Activated CD4-positive, alpha-beta memory T cell treated with anti-CD3 and anti-CD28 coated beads for 36 hours (primary cell): ENCODE measurements at regions of chr2 and their contacts with region 1.

Region 1: DNA sequence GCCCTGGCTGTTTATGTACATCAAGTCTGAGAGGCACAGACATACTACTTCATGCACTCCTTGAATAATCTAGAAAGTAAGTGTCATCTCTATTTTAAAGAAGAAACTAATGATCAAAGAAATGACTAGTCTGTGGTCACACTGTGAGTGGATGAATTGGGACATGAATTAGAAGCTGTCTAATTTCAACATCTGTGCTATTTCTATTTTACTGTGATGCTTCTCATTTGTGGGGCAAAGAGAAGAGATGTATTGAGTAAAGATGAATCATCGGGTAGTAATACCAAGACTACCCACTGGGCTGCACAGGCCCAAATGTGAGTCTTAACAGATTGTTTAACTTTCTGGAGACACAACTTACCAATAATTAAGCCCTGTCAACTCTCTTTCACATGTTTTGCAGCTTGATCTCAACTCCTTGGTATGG is 42.4 kb upstream of the MTIF2 start:
- DNase-seq: peak; percentile 65
- H3K4me3 Mint-ChIP-seq: no peak overlapping the region
- H3K27ac Mint-ChIP-seq: no peak overlapping the region
- H3K4me1 Mint-ChIP-seq: peaks cover 22% of the 10 kb centered on the region
- H3K27me3 Mint-ChIP-seq: no peaks in the 10 kb centered on the region

Region 2: GRCh38 chr2:55268907-55269644 is 42.4 kb before region 1 on chr2 and contains the start of gene MTIF2:
- CTCF ChIA-PET with region 1: no interaction called
- POLR2A ChIA-PET with region 1: no interaction called
- intact Hi-C with region 1: loop called (anchors 2 kb)
- DNase-seq: peak; percentile 95
- H3K4me3 Mint-ChIP-seq: peak within 1 kb of the TSS; percentile 93
- H3K27ac Mint-ChIP-seq: peak within 1 kb of the TSS; percentile 88
- H3K4me1 Mint-ChIP-seq: peaks cover 7% of the 10 kb centered on the region
- H3K27me3 Mint-ChIP-seq: peaks cover 2% of the 10 kb centered on the region
- total RNA-seq, gene MTIF2: 42.7 to 43.2 TPM

Region 3: DNA sequence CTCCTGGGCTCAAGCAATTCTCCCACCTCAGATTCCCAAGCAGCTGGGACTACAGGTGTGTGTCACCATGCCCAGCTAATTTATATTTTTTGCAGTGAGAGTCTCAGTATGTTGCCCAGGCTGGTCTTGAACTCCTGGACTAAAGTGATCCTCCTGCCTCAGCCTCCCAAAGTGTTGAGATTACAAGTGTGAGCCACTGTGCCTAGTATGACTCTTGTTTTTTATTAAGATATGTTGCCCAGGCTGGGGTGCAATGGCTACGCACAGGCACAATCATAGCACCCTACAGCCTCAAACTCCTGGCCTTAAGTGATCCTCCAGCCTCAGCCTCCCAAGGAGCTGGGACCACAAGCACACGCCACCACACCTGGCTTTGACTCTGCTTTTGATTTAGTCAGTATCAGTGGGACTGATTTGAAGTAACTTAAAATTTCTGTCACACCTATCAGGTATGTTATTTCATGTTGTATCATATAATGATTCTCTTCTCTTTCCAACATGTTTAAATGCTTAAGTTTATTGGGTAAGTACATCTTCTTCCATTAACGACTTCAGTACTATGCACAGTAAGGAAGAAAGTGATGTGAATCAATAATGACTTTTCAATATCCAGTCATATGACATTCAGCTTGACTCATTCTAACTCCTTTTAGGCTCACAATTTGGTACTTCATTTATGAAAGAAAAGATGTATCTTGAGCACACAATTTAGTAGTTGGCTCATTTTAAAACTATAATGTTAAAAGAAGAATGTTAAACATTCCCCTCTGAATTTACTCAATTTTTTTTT is 299.7 kb after region 1 on chr2:
- CTCF ChIA-PET with region 1: no interaction called
- POLR2A ChIA-PET with region 1: no interaction called
- intact Hi-C with region 1: loop called (anchors 1 kb)
- DNase-seq: no peak
- H3K4me3 Mint-ChIP-seq: no peak overlapping the region
- H3K27ac Mint-ChIP-seq: peak overlapping the region; percentile 34
- H3K4me1 Mint-ChIP-seq: peaks cover 56% of the 10 kb centered on the region
- H3K27me3 Mint-ChIP-seq: no peaks in the 10 kb centered on the region